Gastrocnemius medialis (tissue), 4 donors: ENCODE measurements at regions of chr12 and their contacts with region 1.

Region 1: DNA sequence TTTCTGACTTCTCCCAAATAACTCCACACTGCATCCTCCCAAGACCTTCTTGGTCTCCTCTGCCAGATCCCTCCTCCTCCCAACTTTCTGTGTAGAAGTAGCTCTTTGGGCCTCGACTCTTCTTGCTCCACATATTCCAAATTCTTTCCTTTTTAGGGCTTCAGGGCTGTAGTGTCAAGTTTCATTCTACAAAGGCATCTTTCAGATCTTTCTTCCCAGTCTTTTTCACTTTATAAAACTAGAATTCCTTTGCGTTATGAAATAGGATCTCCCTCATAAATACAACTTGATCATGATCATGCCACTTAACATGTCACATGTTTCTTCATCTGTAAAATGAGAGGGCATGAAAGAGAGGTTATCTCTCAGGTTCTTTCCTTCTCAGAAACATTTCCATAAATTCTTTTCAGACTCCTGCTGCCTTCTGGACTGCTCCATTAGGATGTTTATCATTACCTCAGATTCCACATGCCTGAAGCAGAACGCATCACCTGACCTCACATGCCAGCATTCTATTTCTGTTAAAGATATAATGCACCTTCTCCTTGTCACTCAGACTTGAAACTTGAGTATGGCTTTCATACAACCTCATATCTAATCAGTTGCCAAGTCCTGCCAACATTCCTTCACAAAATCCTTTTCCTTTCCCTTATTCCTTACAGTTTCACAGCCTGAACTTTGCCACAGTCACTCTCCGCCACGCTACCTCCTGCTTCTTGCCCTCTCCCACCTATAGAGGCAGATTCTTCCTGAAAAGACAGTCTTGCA is 8.5 kb downstream of the SLC38A1 start:
- DNase-seq: peak in 1 of 2 donors; percentile 42
- ATAC-seq: peak; percentile 58 to 74
- H3K4me3 ChIP-seq: peak overlapping the region in 2 of 4 donors; percentile 4 to 15
- H3K27ac ChIP-seq: peak overlapping the region; percentile 60 to 98 (median 73)
- H3K4me1 ChIP-seq: peaks cover 22 to 46% of the 10 kb centered on the region in 2 donors
- H3K27me3 ChIP-seq: no peaks in the 10 kb centered on the region
- CTCF ChIP-seq: no peak
- POLR2A ChIP-seq: peak in 1 of 2 donors; percentile 24

Region 2: GRCh38 chr12:45859915-45860314 is 400.4 kb before region 1 on chr12:
- in situ Hi-C with region 1: no loop called
- intact Hi-C with region 1: no loop called
- DNase-seq: no peak
- ATAC-seq: no peak
- H3K4me3 ChIP-seq: no peak overlapping the region
- H3K27ac ChIP-seq: no peak overlapping the region
- H3K4me1 ChIP-seq: peaks cover 0 to 5% of the 10 kb centered on the region in 2 donors
- H3K27me3 ChIP-seq: no peaks in the 10 kb centered on the region
- CTCF ChIP-seq: no peak
- POLR2A ChIP-seq: no peak

Region 3: GRCh38 chr12:45994736-45995135 is 265.6 kb before region 1 on chr12:
- in situ Hi-C with region 1: no loop called
- intact Hi-C with region 1: no loop called
- DNase-seq: no peak
- ATAC-seq: no peak
- H3K4me3 ChIP-seq: no peak overlapping the region
- H3K27ac ChIP-seq: no peak overlapping the region
- H3K4me1 ChIP-seq: peaks cover 3 to 4% of the 10 kb centered on the region in 2 donors
- H3K27me3 ChIP-seq: no peaks in the 10 kb centered on the region
- CTCF ChIP-seq: no peak
- POLR2A ChIP-seq: no peak

Region 4: GRCh38 chr12:46209914-46210872 is 50.1 kb before region 1 on chr12:
- in situ Hi-C with region 1: no loop called
- intact Hi-C with region 1: loop called (anchors 5 kb)
- DNase-seq: peak; percentile 68 to 83
- ATAC-seq: peak; percentile 76 to 86
- H3K4me3 ChIP-seq: no peak overlapping the region
- H3K27ac ChIP-seq: peak overlapping the region; percentile 45 to 76 (median 69)
- H3K4me1 ChIP-seq: peaks cover 36 to 51% of the 10 kb centered on the region in 2 donors
- H3K27me3 ChIP-seq: no peaks in the 10 kb centered on the region
- CTCF ChIP-seq: no peak
- POLR2A ChIP-seq: peak in 1 of 2 donors; percentile 35